ENCODE measurements at regions of chr6 and their contacts with region 1.

Region 1: GRCh38 chr6:41424370-41425058 is 89.1 kb downstream of the NCR2 start:
- DNase-seq: peak; percentile 85
- ATAC-seq: peak; percentile 50
- H3K4me3 ChIP-seq: no peak overlapping the region
- H3K4me3 Mint-ChIP-seq: no peak overlapping the region
- H3K27ac ChIP-seq: no peak overlapping the region
- H3K27ac Mint-ChIP-seq: no peak overlapping the region
- H3K4me1 ChIP-seq: peaks cover 28 to 36% of the 10 kb centered on the region in 2 donors
- H3K4me1 Mint-ChIP-seq: peaks cover 9% of the 10 kb centered on the region
- H3K27me3 ChIP-seq: peaks cover 0 to 14% (median 2%) of the 10 kb centered on the region in 4 experiments
- H3K27me3 Mint-ChIP-seq: peaks cover 10% of the 10 kb centered on the region
- CTCF ChIP-seq: peak; percentile 95

Region 2: DNA sequence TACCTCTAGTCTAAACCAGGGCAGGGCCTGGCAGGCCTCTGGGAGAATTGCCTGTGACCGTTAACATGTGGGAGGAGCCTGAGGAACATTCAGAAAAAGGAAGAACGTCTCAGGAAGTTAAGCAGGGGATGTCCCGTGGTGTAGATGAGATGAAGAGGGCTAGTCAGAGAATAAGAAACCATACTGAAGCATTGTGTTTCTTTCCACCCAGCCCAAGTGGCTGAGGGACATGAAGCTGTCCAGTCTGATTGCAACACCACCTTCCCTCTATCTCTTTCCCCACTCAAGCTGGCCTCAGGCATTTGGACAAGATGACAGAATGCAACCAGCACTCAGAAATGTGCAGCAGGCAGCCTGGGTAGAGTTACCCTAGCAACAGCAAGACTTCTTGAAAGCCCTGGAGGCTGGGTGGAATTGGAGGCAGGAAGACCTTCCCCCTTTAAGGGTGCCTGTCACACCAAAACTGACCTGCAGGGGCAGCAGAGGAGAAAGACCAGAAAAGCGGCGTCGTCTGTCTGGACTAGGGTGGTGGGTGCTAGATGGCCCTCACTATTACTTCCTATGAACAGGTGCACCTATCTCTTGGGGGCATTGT is 571.6 kb before region 1 on chr6:
- CTCF ChIA-PET with region 1: no interaction called
- POLR2A ChIA-PET with region 1: no interaction called
- intact Hi-C with region 1: no loop called
- DNase-seq: no peak
- ATAC-seq: no peak
- H3K4me3 ChIP-seq: no peak overlapping the region
- H3K4me3 Mint-ChIP-seq: no peak overlapping the region
- H3K27ac ChIP-seq: no peak overlapping the region
- H3K27ac Mint-ChIP-seq: no peak overlapping the region
- H3K4me1 ChIP-seq: peaks cover 0 to 4% of the 10 kb centered on the region in 2 donors
- H3K4me1 Mint-ChIP-seq: peaks cover 4% of the 10 kb centered on the region
- H3K27me3 ChIP-seq: peaks cover 0 to 3% (median 1%) of the 10 kb centered on the region in 4 experiments
- H3K27me3 Mint-ChIP-seq: peaks cover 16% of the 10 kb centered on the region
- CTCF ChIP-seq: no peak

Region 3: GRCh38 chr6:41051873-41052272 is 372.6 kb before region 1 on chr6:
- CTCF ChIA-PET with region 1: no interaction called
- POLR2A ChIA-PET with region 1: no interaction called
- intact Hi-C with region 1: no loop called
- DNase-seq: peak; percentile 57
- ATAC-seq: peak; percentile 81
- H3K4me3 ChIP-seq: peak overlapping the region in 1 of 5 experiments; percentile 1
- H3K4me3 Mint-ChIP-seq: peak overlapping the region; percentile 24
- H3K27ac ChIP-seq: peak overlapping the region; percentile 35 to 67
- H3K27ac Mint-ChIP-seq: peak overlapping the region; percentile 68
- H3K4me1 ChIP-seq: peaks cover 16 to 20% of the 10 kb centered on the region in 2 donors
- H3K4me1 Mint-ChIP-seq: peaks cover 21% of the 10 kb centered on the region
- H3K27me3 ChIP-seq: no peaks in the 10 kb centered on the region
- H3K27me3 Mint-ChIP-seq: no peaks in the 10 kb centered on the region
- CTCF ChIP-seq: no peak

Region 4: DNA sequence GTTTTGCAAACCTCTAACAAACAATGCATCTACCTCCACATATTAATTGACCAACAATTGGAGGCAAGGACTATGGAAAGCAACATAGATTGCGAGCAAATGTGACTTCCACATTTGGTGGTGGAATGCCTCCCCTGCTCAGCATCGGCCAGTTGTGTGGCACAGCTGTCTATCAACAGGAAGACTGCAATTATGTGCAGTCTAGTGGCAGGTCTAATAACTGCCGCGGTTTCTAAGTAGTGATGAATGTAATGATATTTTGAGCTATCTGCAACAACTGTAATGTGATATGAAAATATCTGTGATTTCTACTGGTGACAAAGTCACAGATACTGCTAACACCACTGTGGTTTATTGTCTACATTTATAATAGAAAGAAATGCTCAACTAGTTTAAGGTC is 32.3 kb before region 1 on chr6:
- CTCF ChIA-PET with region 1: interaction called, 20 read pairs
- POLR2A ChIA-PET with region 1: no interaction called
- intact Hi-C with region 1: no loop called
- DNase-seq: no peak
- ATAC-seq: no peak
- H3K4me3 ChIP-seq: no peak overlapping the region
- H3K4me3 Mint-ChIP-seq: no peak overlapping the region
- H3K27ac ChIP-seq: no peak overlapping the region
- H3K27ac Mint-ChIP-seq: no peak overlapping the region
- H3K4me1 ChIP-seq: no peaks in the 10 kb centered on the region
- H3K4me1 Mint-ChIP-seq: no peaks in the 10 kb centered on the region
- H3K27me3 ChIP-seq: peaks cover 0 to 27% (median 8%) of the 10 kb centered on the region in 4 experiments
- H3K27me3 Mint-ChIP-seq: peaks cover 38% of the 10 kb centered on the region
- CTCF ChIP-seq: no peak

Region 5: DNA sequence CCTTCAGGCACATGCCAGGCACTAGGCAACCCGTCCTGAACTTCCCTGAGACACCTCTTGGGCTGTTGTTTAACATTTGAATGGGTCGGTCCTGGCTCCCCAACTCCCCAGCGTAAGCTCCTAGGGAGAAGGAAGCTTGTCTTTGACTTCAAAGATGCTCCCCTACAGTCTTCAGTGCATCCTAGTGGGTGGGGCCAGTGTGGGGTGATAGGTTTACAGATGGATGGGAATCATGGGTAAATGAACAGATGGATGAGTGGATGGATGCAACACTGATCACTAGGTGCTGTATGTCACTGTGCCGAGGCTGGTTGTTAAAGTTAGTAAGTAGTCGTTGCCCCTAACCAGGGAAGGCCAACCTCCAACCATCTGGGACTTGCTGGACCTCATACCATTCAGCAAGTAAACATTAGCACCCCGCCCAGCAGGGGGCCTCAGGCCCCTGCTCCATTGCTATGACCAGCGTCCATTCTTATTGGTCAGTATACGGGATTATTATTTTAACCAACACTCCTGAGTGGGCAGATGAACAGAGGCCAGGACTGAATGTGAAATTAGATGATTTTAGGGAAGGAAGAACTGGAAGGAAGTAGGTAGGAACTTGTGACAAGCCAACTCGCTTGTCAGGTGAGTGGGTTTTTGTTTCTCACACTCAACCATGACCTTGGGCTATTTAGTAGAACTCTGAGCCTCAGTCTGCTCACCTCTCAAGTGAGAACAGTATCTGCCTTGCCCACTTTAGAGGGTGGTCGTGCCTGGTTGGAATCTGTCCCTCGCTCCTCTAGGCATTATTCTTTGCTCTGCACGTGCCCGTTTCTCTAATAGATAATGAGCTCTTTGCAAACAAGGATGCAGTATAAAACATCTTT is 38.8 kb after region 1 on chr6:
- CTCF ChIA-PET with region 1: interaction called, 31 read pairs
- POLR2A ChIA-PET with region 1: no interaction called
- intact Hi-C with region 1: loop called (anchors 2 kb)
- DNase-seq: peak; percentile 65
- ATAC-seq: peak; percentile 68
- H3K4me3 ChIP-seq: no peak overlapping the region
- H3K4me3 Mint-ChIP-seq: no peak overlapping the region
- H3K27ac ChIP-seq: no peak overlapping the region
- H3K27ac Mint-ChIP-seq: no peak overlapping the region
- H3K4me1 ChIP-seq: peaks cover 8 to 10% of the 10 kb centered on the region in 2 donors
- H3K4me1 Mint-ChIP-seq: peaks cover 11% of the 10 kb centered on the region
- H3K27me3 ChIP-seq: peaks cover 0 to 21% (median 1%) of the 10 kb centered on the region in 4 experiments
- H3K27me3 Mint-ChIP-seq: peaks cover 38% of the 10 kb centered on the region
- CTCF ChIP-seq: peak; percentile 72

Region 6: GRCh38 chr6:41531591-41532582 is 107.4 kb after region 1 on chr6:
- CTCF ChIA-PET with region 1: interaction called, 5 read pairs
- POLR2A ChIA-PET with region 1: no interaction called
- intact Hi-C with region 1: loop called (anchors 1 kb)
- DNase-seq: peak; percentile 86
- ATAC-seq: peak; percentile 82
- H3K4me3 ChIP-seq: peak overlapping the region in 4 of 5 experiments; percentile 29 to 48 (median 40)
- H3K4me3 Mint-ChIP-seq: peak overlapping the region; percentile 81
- H3K27ac ChIP-seq: peak overlapping the region; percentile 80 to 87
- H3K27ac Mint-ChIP-seq: peak overlapping the region; percentile 94
- H3K4me1 ChIP-seq: peaks cover 40 to 56% of the 10 kb centered on the region in 2 donors
- H3K4me1 Mint-ChIP-seq: peaks cover 68% of the 10 kb centered on the region
- H3K27me3 ChIP-seq: peaks cover 0 to 2% (median 0%) of the 10 kb centered on the region in 4 experiments
- H3K27me3 Mint-ChIP-seq: peaks cover 6% of the 10 kb centered on the region
- CTCF ChIP-seq: no peak

Region 7: DNA sequence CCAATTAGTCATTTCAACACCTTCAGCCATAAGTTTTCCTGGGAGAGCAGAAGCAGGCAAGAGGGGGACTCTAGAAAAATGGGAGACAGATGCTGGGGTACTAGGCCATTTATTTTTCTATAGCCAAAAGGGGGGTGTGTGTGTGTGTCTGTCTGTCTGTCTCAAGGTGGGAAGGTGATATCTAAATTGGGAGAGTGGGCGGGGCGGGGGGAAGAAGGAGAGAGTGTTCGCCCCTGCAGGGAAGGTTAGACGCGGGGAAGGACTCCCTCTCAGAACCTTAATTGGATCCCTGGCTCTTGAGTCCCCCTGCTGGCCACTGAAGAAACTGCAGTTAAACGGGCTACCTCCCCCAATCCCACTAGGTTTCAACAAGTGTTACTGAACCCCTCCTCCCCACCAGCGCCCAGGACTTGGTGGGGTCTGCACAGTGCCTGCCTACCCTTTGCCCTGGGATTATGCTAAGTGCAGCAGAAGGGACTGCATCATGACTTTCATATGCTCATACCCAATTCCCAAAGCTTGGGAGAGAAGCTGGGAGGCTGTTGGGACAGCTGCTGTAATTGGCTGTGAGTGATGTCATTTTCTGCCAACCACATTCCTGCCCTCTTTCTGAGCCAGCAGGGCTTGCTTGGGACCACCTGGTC is 167.5 kb after region 1 on chr6:
- CTCF ChIA-PET with region 1: interaction called, 114 read pairs
- POLR2A ChIA-PET with region 1: no interaction called
- intact Hi-C with region 1: loop called (anchors 1 kb)
- DNase-seq: peak; percentile 83
- ATAC-seq: peak; percentile 84
- H3K4me3 ChIP-seq: no peak overlapping the region
- H3K4me3 Mint-ChIP-seq: no peak overlapping the region
- H3K27ac ChIP-seq: no peak overlapping the region
- H3K27ac Mint-ChIP-seq: no peak overlapping the region
- H3K4me1 ChIP-seq: peaks cover 0 to 3% of the 10 kb centered on the region in 2 donors
- H3K4me1 Mint-ChIP-seq: peaks cover 2% of the 10 kb centered on the region
- H3K27me3 ChIP-seq: no peaks in the 10 kb centered on the region
- H3K27me3 Mint-ChIP-seq: no peaks in the 10 kb centered on the region
- CTCF ChIP-seq: peak; percentile 87

Region 8: GRCh38 chr6:41615254-41615653 is 190.7 kb after region 1 on chr6:
- CTCF ChIA-PET with region 1: no interaction called
- POLR2A ChIA-PET with region 1: no interaction called
- intact Hi-C with region 1: no loop called
- DNase-seq: no peak
- ATAC-seq: no peak
- H3K4me3 ChIP-seq: no peak overlapping the region
- H3K4me3 Mint-ChIP-seq: no peak overlapping the region
- H3K27ac ChIP-seq: no peak overlapping the region
- H3K27ac Mint-ChIP-seq: no peak overlapping the region
- H3K4me1 ChIP-seq: no peaks in the 10 kb centered on the region
- H3K4me1 Mint-ChIP-seq: no peaks in the 10 kb centered on the region
- H3K27me3 ChIP-seq: peaks cover 0 to 6% (median 0%) of the 10 kb centered on the region in 4 experiments
- H3K27me3 Mint-ChIP-seq: peaks cover 28% of the 10 kb centered on the region
- CTCF ChIP-seq: no peak

Measured in B cell (primary cell).